CD8-positive, alpha-beta T cell (primary cell): ENCODE measurements at regions of chr9 and their contacts with region 1.

Region 1: DNA sequence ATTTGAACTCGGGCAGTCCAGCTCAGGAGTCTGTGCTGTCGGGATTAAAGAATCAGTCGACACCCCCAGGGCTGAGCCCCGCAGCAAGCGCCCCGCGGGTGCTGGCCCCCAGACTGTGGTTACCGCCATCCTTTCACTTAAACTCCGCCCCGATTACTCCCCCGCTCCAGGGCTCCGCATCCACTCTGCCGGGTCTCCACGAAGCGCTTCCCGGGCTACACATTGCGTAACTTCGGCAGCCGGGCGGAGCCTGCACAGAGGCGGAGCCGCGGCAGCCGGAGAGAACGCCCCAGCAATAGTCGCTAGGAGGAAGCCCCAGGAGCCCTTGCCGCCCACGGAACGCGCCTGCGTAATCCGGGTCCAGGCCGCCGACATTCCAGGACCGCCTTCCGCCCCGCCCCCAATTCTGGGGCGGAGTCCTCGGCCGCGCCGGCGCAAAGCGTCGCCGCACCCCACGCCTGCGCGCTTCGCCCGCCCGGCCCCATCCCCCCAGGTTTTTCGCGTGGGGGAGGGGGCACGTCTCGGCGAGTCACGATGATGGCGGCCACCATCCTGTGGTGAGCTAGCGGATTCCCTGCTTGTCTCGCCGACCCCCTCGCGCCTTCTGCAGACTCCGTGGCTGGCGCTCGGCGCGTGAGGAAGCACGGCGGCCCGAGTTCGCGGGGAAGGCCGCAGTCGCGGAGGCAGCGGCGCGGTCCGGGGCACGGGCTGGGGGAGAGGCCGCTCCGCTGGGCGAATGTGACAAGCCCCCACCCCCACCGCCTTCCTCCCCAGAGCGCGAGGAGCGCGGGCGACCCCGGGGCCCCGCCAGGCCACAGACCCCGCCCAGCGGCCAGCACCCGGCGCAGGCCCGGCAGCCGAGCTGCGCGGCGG is at the start of gene RAD23B:
- DNase-seq: peak; percentile 96 to 99 (median 98)
- ATAC-seq: peak; percentile 87
- H3K4me3 ChIP-seq: peak within 1 kb of the TSS; percentile 69 to 90
- H3K4me3 Mint-ChIP-seq: peak within 1 kb of the TSS; percentile 96
- H3K27ac ChIP-seq: peak within 1 kb of the TSS; percentile 81 to 87
- H3K27ac Mint-ChIP-seq: peak within 1 kb of the TSS; percentile 94
- H3K4me1 ChIP-seq: peaks cover 37% of the 10 kb centered on the region
- H3K4me1 Mint-ChIP-seq: peaks cover 42% of the 10 kb centered on the region
- H3K27me3 ChIP-seq: peaks cover 0 to under 1% of the 10 kb centered on the region in 2 experiments
- H3K27me3 Mint-ChIP-seq: no peaks in the 10 kb centered on the region
- CTCF ChIP-seq: no peak
- total RNA-seq, gene RAD23B: 82.9 to 91.0 TPM

Region 2: DNA sequence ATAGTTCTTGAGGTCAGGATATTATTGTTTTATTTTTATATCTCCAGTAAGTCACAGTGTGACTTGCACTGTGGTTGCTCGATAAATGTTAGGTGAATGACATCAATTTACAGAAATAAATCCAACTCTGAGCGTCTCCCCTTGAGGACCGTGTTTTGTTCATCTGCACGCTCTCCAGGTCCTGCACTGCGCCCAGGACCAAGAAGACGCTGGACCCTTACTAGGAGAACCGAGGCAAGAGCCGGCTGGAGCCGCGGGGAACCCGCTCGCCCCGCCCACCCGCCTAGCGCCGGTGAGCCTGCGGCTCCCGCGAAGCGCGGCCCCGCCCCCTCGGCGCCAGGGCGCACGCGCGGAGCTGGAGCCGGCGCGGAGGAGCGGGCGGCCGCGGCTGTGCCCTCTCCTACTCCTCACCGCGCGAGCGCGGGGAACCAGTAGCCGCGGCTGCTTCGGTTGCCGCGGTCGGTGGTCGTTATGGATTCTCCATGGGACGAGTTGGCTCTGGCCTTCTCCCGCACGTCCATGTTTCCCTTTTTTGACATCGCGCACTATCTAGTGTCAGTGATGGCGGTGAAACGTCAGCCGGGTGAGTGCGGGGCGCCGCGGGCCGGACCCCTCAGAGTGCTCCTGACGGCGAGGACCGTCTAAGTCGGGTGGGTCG is 1588.7 kb before region 1 on chr9 and contains the start of gene TMEM38B:
- CTCF ChIA-PET with region 1: no interaction called
- POLR2A ChIA-PET with region 1: no interaction called
- intact Hi-C with region 1: loop called (anchors 10 kb)
- DNase-seq: peak; percentile 54 to 91 (median 73)
- ATAC-seq: peak; percentile 90
- H3K4me3 ChIP-seq: peak within 1 kb of the TSS; percentile 69 to 78
- H3K4me3 Mint-ChIP-seq: peak within 1 kb of the TSS; percentile 90
- H3K27ac ChIP-seq: peak within 1 kb of the TSS; percentile 20 to 58
- H3K27ac Mint-ChIP-seq: peak within 1 kb of the TSS; percentile 73
- H3K4me1 ChIP-seq: peaks cover 15% of the 10 kb centered on the region
- H3K4me1 Mint-ChIP-seq: peaks cover 32% of the 10 kb centered on the region
- H3K27me3 ChIP-seq: peaks cover 0 to 13% of the 10 kb centered on the region in 2 experiments
- H3K27me3 Mint-ChIP-seq: peaks cover 32% of the 10 kb centered on the region
- CTCF ChIP-seq: no peak
- total RNA-seq, gene TMEM38B: 9.5 to 14.1 TPM

Region 3: DNA sequence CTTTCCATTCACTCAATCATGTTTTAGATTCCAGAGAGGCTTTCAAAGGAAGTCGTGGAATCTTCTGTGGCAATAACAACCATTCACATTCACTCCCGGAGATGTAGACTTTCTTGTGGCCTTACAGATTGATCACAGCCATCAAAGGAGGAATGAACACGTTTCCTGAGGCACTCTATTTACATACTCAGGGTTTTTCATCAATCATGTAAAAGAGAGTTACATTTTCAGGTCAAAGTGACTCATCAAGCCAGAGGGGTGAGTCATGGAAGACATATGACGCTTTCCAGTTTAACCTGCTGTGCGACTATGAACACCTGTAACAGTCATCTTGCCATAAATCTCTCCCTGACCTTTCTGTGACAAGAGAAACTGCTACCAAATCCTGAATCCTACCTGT is 39.2 kb before region 1 on chr9:
- CTCF ChIA-PET with region 1: no interaction called
- POLR2A ChIA-PET with region 1: no interaction called
- intact Hi-C with region 1: loop called in 1 of 2 experiments (anchors 1 kb)
- DNase-seq: peak in 6 of 9 experiments; percentile 3 to 32 (median 18)
- ATAC-seq: peak; percentile 77
- H3K4me3 ChIP-seq: no peak overlapping the region
- H3K4me3 Mint-ChIP-seq: no peak overlapping the region
- H3K27ac ChIP-seq: no peak overlapping the region
- H3K27ac Mint-ChIP-seq: no peak overlapping the region
- H3K4me1 ChIP-seq: peaks cover 5% of the 10 kb centered on the region
- H3K4me1 Mint-ChIP-seq: peaks cover 13% of the 10 kb centered on the region
- H3K27me3 ChIP-seq: no peaks in the 10 kb centered on the region
- H3K27me3 Mint-ChIP-seq: no peaks in the 10 kb centered on the region
- CTCF ChIP-seq: no peak

Region 4: DNA sequence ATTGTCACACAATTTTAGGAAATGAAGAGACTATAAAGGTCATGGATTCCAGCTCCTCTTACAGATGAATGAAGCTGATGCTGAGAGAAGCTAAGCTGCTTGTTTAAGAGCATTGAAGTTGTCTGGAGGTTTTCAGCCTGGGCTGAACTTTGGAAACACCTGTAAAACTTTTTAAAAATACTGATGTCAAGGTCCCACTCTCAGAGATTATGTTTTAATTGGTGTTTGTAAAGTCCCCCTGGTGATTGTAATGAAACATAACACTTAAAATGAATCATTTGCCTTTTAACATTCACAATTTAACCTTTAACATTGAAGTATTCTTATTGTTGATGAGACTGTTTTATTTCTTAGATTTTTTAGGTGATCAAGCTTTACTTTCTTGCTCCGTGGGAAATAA is 16.4 kb after region 1 on chr9:
- CTCF ChIA-PET with region 1: interaction called, 5 read pairs
- POLR2A ChIA-PET with region 1: interaction called, 7 read pairs
- intact Hi-C with region 1: loop called (anchors 1 to 2 kb)
- DNase-seq: peak in 2 of 9 experiments; percentile 19 to 47
- ATAC-seq: peak; percentile 65
- H3K4me3 ChIP-seq: no peak overlapping the region
- H3K4me3 Mint-ChIP-seq: no peak overlapping the region
- H3K27ac ChIP-seq: no peak overlapping the region
- H3K27ac Mint-ChIP-seq: peak overlapping the region; percentile 57
- H3K4me1 ChIP-seq: peaks cover 25% of the 10 kb centered on the region
- H3K4me1 Mint-ChIP-seq: peaks cover 40% of the 10 kb centered on the region
- H3K27me3 ChIP-seq: no peaks in the 10 kb centered on the region
- H3K27me3 Mint-ChIP-seq: no peaks in the 10 kb centered on the region
- CTCF ChIP-seq: peak; percentile 68

Region 5: DNA sequence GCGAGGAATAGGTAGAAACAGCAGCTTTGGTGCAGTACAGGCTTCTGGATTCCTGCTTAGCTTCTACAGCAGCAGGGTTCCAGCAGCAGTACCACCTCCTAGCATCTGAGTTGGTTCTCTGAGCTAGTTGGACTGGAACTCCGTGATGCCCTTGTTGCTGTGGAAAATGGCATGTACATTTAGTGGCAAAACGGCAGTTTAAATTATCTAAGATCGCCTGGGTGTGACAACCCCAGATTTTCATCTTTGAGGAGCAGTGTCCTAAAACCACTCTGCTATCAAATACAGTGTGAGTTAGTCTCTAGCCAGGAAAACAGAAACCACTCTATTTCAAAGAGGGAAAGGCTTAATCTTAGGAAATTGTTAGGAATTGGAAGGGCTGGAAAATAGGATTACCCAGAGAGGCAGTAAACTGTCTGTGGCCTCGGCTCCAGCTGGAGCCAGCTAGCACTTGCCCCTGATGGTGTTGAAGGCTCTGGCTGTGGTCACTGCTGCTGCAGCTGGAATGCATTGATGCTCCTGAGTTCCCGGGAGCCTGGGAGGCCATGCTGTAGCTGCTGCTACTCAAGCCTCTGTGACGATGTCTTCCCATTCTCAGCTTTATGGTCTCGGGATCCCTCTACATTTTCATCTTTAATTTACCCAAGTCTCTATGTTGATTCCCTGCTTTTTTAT is 29.5 kb after region 1 on chr9:
- CTCF ChIA-PET with region 1: no interaction called
- POLR2A ChIA-PET with region 1: interaction called, 3 read pairs
- intact Hi-C with region 1: loop called in 1 of 2 experiments (anchors 5 kb)
- DNase-seq: no peak
- ATAC-seq: no peak
- H3K4me3 ChIP-seq: no peak overlapping the region
- H3K4me3 Mint-ChIP-seq: no peak overlapping the region
- H3K27ac ChIP-seq: no peak overlapping the region
- H3K27ac Mint-ChIP-seq: no peak overlapping the region
- H3K4me1 ChIP-seq: peaks cover 35% of the 10 kb centered on the region
- H3K4me1 Mint-ChIP-seq: peaks cover 80% of the 10 kb centered on the region
- H3K27me3 ChIP-seq: no peaks in the 10 kb centered on the region
- H3K27me3 Mint-ChIP-seq: no peaks in the 10 kb centered on the region
- CTCF ChIP-seq: no peak

Region 6: DNA sequence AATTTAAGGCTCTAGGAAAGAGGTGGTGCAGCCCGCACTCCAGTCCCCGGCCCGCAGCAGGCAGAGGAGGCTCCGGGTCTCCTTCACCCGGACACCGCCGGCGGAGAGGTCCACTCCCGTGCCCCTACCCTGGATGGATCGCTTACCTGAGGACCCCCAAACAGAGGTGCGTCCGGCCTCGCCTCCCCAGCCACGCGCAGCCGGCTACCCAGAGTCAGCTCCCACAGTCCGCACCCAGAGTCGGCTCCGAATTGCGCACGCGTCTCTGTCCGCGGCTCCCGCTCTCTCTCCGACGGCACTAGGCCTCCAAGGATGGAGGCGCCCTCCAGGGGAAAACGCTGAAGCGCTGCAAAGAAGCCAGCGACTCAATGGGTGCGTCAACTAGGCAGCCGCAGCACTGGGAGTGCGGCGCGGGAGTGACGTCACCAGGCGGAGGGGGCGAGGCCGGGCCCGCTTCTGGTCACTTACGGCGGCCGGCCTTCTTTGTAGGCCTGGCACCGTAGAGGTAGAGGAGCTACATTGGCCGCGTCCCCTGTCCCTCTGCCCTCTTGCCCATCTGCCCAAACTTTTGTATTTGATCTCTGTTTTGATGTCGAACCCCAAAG is 1650.8 kb after region 1 on chr9 and contains the start of gene ELP1:
- CTCF ChIA-PET with region 1: no interaction called
- POLR2A ChIA-PET with region 1: no interaction called
- intact Hi-C with region 1: loop called (anchors 2 to 10 kb)
- DNase-seq: peak; percentile 84 to 96 (median 93)
- ATAC-seq: peak; percentile 85
- H3K4me3 ChIP-seq: peak within 1 kb of the TSS; percentile 81 to 95
- H3K4me3 Mint-ChIP-seq: peak within 1 kb of the TSS; percentile 98
- H3K27ac ChIP-seq: peak within 1 kb of the TSS; percentile 92 to 93
- H3K27ac Mint-ChIP-seq: peak within 1 kb of the TSS; percentile 97
- H3K4me1 ChIP-seq: peaks cover 21% of the 10 kb centered on the region
- H3K4me1 Mint-ChIP-seq: peaks cover 52% of the 10 kb centered on the region
- H3K27me3 ChIP-seq: no peaks in the 10 kb centered on the region
- H3K27me3 Mint-ChIP-seq: no peaks in the 10 kb centered on the region
- CTCF ChIP-seq: no peak
- total RNA-seq, gene ELP1: 22.4 to 26.8 TPM